MCF 10A (cell line): ENCODE measurements at regions of chr22 and their contacts with region 1.

Region 1: GRCh38 chr22:36901411-36902142 is 11.9 kb upstream of the CSF2RB start:
- DNase-seq: no peak
- H3K4me3 Mint-ChIP-seq: no peak overlapping the region
- H3K27ac Mint-ChIP-seq: no peak overlapping the region
- H3K4me1 Mint-ChIP-seq: no peaks in the 10 kb centered on the region
- H3K27me3 Mint-ChIP-seq: peaks cover 71% of the 10 kb centered on the region
- CTCF ChIP-seq: no peak

Region 2: GRCh38 chr22:36808761-36809224 is 92.8 kb before region 1 on chr22:
- CTCF ChIA-PET with region 1: no interaction called
- POLR2A ChIA-PET with region 1: no interaction called
- intact Hi-C with region 1: loop called (anchors 10 kb)
- DNase-seq: no peak
- H3K4me3 Mint-ChIP-seq: no peak overlapping the region
- H3K27ac Mint-ChIP-seq: no peak overlapping the region
- H3K4me1 Mint-ChIP-seq: no peaks in the 10 kb centered on the region
- H3K27me3 Mint-ChIP-seq: peaks cover 45% of the 10 kb centered on the region
- CTCF ChIP-seq: no peak